Activated CD4-positive, alpha-beta memory T cell treated with anti-CD3 and anti-CD28 coated beads for 36 hours (primary cell): ENCODE measurements at regions of chr6 and their contacts with region 1.

Region 1: DNA sequence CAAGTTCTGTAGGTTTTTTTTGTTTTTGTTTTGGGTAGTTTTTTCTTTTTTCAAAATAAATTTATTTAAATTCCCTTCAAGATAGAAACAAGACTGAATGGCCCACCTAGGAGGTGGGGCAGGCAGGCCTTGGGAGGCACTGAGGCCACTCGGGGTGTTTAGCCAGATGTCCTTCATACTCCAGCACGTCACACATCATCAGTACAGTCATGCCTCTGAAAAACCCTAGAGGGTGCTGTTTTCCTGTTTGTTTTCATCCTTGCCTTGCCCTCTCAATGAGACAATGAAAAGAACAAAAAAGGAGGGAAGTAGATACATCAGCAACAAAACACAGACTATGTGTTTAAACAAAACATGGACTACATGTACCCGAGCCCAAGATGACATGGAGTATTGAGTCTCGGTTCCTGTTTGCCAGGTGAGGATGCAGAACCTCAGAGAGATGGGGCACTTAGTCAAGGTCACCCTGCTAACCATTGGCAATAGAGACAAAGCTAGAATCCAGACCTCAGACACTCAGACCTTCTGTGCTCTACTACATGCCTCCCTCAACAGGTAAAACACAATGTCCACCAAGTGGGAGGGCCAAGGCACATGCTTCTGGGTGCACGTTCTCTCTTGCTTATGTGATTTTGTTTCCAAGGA is 26.8 kb upstream of the CLIC5 start:
- DNase-seq: peak; percentile 23
- H3K4me3 Mint-ChIP-seq: no peak overlapping the region
- H3K27ac Mint-ChIP-seq: no peak overlapping the region
- H3K4me1 Mint-ChIP-seq: peaks cover 13% of the 10 kb centered on the region
- H3K27me3 Mint-ChIP-seq: peaks cover 1% of the 10 kb centered on the region

Region 2: GRCh38 chr6:45445749-45446549 is 596.5 kb before region 1 on chr6:
- CTCF ChIA-PET with region 1: no interaction called
- POLR2A ChIA-PET with region 1: no interaction called
- intact Hi-C with region 1: no loop called
- DNase-seq: peak; percentile 72
- H3K4me3 Mint-ChIP-seq: peak overlapping the region; percentile 34
- H3K27ac Mint-ChIP-seq: peak overlapping the region; percentile 88
- H3K4me1 Mint-ChIP-seq: peaks cover 92% of the 10 kb centered on the region
- H3K27me3 Mint-ChIP-seq: no peaks in the 10 kb centered on the region

Region 3: GRCh38 chr6:46053039-46053933 is 10.8 kb after region 1 on chr6:
- CTCF ChIA-PET with region 1: interaction called, 7 read pairs
- POLR2A ChIA-PET with region 1: no interaction called
- intact Hi-C with region 1: loop called (anchors 1 kb)
- DNase-seq: peak; percentile 17
- H3K4me3 Mint-ChIP-seq: no peak overlapping the region
- H3K27ac Mint-ChIP-seq: peak overlapping the region; percentile 74
- H3K4me1 Mint-ChIP-seq: peaks cover 29% of the 10 kb centered on the region
- H3K27me3 Mint-ChIP-seq: peaks cover 17% of the 10 kb centered on the region